RWPE1 (cell line): ENCODE measurements at regions of chr1 and their contacts with region 1.

Region 1: GRCh38 chr1:206912445-206913095 is 9.2 kb downstream of the FCMR start:
- DNase-seq: peak; percentile 91
- H3K27ac ChIP-seq: no peak overlapping the region
- CTCF ChIP-seq: peak; percentile 83

Region 2: GRCh38 chr1:206635080-206635977 is 277.2 kb before region 1 on chr1 and contains the start of gene DYRK3:
- CTCF ChIA-PET with region 1: interaction called, 12 read pairs
- POLR2A ChIA-PET with region 1: interaction called, 6 read pairs
- DNase-seq: peak; percentile 99
- H3K27ac ChIP-seq: peak within 1 kb of the TSS; percentile 89
- CTCF ChIP-seq: no peak

Region 3: GRCh38 chr1:206725109-206725963 is 187.2 kb before region 1 on chr1:
- CTCF ChIA-PET with region 1: interaction called, 16 read pairs
- POLR2A ChIA-PET with region 1: interaction called, 3 read pairs
- DNase-seq: no peak
- H3K27ac ChIP-seq: no peak overlapping the region
- CTCF ChIP-seq: no peak; the same call in 1 of the 2 replicates

Region 4: DNA sequence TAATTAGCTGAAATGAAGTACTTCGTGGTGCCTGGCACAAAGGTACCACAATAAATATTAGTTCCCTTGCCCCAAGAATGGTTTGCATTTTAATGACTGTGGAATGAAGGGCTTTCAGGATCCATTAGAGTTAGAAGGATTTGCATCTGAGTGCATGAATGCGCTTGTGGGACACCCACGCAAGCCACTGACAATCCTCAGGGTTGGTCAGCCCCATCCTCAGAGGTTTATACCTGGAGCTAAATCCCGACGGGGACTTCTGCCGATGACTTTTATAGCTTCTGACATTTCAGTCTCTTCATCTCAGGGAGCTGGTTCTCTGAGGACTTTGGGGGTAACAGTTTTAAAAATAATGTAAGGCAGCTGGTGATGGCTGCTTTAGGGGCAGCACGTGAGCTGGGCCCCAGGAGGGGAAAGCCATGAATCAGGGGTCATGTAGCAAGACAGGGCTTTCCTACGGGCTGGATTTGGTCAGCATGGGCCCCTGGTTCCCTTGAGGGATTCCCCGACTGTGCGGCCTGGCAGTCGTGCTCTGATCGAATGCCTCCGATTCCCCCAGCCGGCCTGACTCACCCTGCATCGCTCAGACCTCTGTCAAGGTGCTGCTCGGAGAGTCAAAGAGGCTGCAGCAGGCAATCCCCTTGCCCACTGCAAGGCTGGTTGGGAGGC is 119.5 kb before region 1 on chr1:
- CTCF ChIA-PET with region 1: no interaction called
- POLR2A ChIA-PET with region 1: no interaction called
- DNase-seq: no peak
- H3K27ac ChIP-seq: no peak overlapping the region
- CTCF ChIP-seq: no peak

Region 5: DNA sequence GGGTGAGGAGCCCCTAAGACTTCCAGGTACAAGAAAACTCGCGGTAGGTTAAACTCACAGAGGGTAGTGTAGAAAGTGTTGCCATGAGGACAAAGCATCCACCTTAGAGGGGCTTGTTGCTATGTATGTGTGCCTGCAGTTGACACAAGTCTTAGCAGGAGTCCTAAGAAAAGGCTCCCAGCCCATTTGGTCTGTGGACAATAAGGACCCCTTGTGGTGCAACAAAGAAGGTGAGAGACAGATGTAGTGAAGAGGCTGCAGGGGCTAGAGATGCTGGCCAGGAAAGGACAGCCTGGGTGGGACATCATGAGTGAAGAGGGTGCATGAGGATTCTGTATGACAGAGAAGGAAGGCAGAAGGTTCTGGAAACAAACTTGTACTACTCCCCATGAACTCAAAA is 104.0 kb before region 1 on chr1:
- CTCF ChIA-PET with region 1: interaction called, 34 read pairs
- POLR2A ChIA-PET with region 1: no interaction called
- DNase-seq: no peak
- H3K27ac ChIP-seq: no peak overlapping the region
- CTCF ChIP-seq: no peak

Region 6: GRCh38 chr1:206926286-206926685 is 13.7 kb after region 1 on chr1:
- CTCF ChIA-PET with region 1: interaction called, 10 read pairs
- POLR2A ChIA-PET with region 1: interaction called, 3 read pairs
- DNase-seq: no peak
- H3K27ac ChIP-seq: no peak overlapping the region
- CTCF ChIP-seq: no peak